PC-3 (cell line): ENCODE measurements at regions of chr2 and their contacts with region 1.

Region 1: DNA sequence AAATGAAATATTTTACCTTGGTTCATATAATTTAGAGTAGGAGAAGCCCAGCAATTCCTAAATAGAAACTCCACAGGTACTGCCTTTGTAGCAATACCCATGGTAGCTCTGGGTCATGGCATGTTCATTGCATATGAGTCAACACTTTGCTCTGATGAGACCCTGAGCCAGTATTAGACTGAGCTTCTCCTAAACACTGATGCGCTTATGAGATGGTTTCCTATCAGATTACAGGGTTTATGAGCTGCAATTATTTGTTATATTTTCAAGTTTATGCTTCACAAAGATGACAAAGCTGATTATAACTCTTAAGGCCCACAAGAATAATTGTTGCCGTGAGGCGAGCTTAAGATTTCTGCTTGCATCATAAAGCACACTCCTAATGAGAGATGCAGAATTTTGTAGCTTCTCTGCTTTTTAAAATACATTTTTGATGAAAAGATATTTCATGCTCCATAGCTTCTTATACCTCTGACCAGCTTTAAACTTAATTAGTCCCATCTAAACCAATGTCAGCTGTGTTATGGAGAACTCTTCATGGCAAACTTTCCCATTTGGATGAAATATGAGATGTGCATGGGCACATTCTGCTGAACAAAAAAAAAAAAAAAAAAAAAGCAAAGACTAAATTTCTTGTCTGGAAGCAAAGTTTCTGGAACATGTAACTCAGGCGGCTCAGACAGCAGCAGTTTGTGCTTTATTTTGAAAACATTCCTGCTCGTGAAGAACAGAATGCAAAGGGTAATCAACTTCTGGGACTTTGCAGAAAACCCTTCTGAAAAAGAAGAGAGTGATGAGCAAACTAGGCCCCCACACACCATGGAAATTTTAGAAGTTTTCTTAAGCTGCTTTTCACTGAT is 162.6 kb downstream of the KCNE4 start:
- DNase-seq: no peak
- ATAC-seq: no peak
- H3K4me3 ChIP-seq: no peak overlapping the region
- H3K27ac ChIP-seq: no peak overlapping the region
- H3K4me1 ChIP-seq: peaks cover 8% of the 10 kb centered on the region; the same call in 1 of the 2 replicates
- H3K27me3 ChIP-seq: peaks cover 48% of the 10 kb centered on the region
- CTCF ChIP-seq: no peak

Region 2: DNA sequence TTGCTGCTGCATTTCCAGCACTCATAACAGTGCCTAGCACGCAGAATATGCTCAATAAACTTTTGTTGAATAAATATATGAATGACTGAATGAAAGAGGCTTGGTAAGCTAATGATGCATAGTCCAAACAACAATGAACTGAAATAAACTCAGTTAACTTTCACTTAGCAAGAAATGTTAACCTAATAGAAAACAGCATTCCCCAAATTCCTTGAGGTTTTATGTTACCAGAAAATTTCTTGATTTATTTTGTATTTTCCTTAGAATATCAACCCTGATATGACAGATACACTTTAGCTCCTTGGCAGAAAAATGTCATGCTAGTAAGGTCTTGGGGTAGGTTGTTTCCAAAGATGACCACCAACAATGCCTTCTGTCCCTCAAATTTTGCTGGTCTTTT is 54.8 kb after region 1 on chr2:
- CTCF ChIA-PET with region 1: interaction called, 12 read pairs
- POLR2A ChIA-PET with region 1: no interaction called
- intact Hi-C with region 1: no loop called
- DNase-seq: no peak
- ATAC-seq: no peak
- H3K4me3 ChIP-seq: no peak overlapping the region
- H3K27ac ChIP-seq: no peak overlapping the region
- H3K4me1 ChIP-seq: no peaks in the 10 kb centered on the region
- H3K27me3 ChIP-seq: peaks cover 5% of the 10 kb centered on the region; the same call in 1 of the 2 replicates
- CTCF ChIP-seq: no peak

Region 3: GRCh38 chr2:223597076-223597475 is 382.5 kb after region 1 on chr2:
- CTCF ChIA-PET with region 1: interaction called, 12 read pairs
- POLR2A ChIA-PET with region 1: no interaction called
- intact Hi-C with region 1: no loop called
- DNase-seq: peak; percentile 8
- ATAC-seq: peak; percentile 13; the same call in 1 of the 2 replicates
- H3K4me3 ChIP-seq: no peak overlapping the region
- H3K27ac ChIP-seq: no peak overlapping the region
- H3K4me1 ChIP-seq: peaks cover 14% of the 10 kb centered on the region
- H3K27me3 ChIP-seq: no peaks in the 10 kb centered on the region
- CTCF ChIP-seq: no peak

Region 4: GRCh38 chr2:223641097-223641496 is 426.5 kb after region 1 on chr2:
- CTCF ChIA-PET with region 1: no interaction called
- POLR2A ChIA-PET with region 1: no interaction called
- intact Hi-C with region 1: no loop called
- DNase-seq: peak; percentile 31
- ATAC-seq: no peak
- H3K4me3 ChIP-seq: no peak overlapping the region
- H3K27ac ChIP-seq: no peak overlapping the region
- H3K4me1 ChIP-seq: no peaks in the 10 kb centered on the region
- H3K27me3 ChIP-seq: no peaks in the 10 kb centered on the region
- CTCF ChIP-seq: no peak

Region 5: GRCh38 chr2:223712642-223713041 is 498.0 kb after region 1 on chr2:
- CTCF ChIA-PET with region 1: no interaction called
- POLR2A ChIA-PET with region 1: no interaction called
- intact Hi-C with region 1: no loop called
- DNase-seq: no peak
- ATAC-seq: no peak
- H3K4me3 ChIP-seq: no peak overlapping the region
- H3K27ac ChIP-seq: no peak overlapping the region
- H3K4me1 ChIP-seq: no peaks in the 10 kb centered on the region
- H3K27me3 ChIP-seq: no peaks in the 10 kb centered on the region
- CTCF ChIP-seq: no peak